ENCODE measurements at regions of chr12 and their contacts with region 1.

Region 1: DNA sequence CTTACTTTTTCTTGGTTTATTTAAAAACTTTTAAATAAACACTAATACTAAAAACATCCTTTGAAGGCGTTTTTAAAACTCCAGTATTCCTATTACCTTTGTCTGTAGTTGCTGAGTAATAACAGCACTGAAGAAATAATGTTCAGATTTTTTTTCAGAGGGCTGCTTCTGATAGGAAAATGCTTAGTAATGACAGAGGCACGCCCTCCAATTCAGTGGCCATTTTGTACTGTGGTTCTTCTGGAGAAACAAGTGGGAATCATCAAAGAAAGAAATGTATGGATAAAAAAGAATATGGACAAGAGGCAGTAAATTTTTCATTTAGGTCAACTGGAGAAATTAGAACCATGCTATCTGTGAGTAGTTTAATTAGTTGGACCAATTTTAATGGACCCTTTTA is 13.6 kb downstream of the VEZT start:
- DNase-seq: no peak
- ATAC-seq: no peak
- H3K4me3 ChIP-seq: no peak overlapping the region
- H3K4me3 Mint-ChIP-seq: no peak overlapping the region
- H3K27ac ChIP-seq: no peak overlapping the region
- H3K27ac Mint-ChIP-seq: no peak overlapping the region
- H3K4me1 ChIP-seq: no peaks in the 10 kb centered on the region
- H3K4me1 Mint-ChIP-seq: peaks cover 31 to 50% (median 39%) of the 10 kb centered on the region in 3 donors
- H3K27me3 ChIP-seq: no peaks in the 10 kb centered on the region
- H3K27me3 Mint-ChIP-seq: no peaks in the 10 kb centered on the region

Region 2: GRCh38 chr12:95054206-95054605 is 177.0 kb before region 1 on chr12:
- CTCF ChIA-PET with region 1: no interaction called
- POLR2A ChIA-PET with region 1: interaction called in 1 of 2 experiments, 11 read pairs
- DNase-seq: no peak
- ATAC-seq: no peak
- H3K4me3 ChIP-seq: no peak overlapping the region
- H3K4me3 Mint-ChIP-seq: no peak overlapping the region
- H3K27ac ChIP-seq: no peak overlapping the region
- H3K27ac Mint-ChIP-seq: no peak overlapping the region
- H3K4me1 ChIP-seq: no peaks in the 10 kb centered on the region
- H3K4me1 Mint-ChIP-seq: no peaks in the 10 kb centered on the region
- H3K27me3 ChIP-seq: no peaks in the 10 kb centered on the region
- H3K27me3 Mint-ChIP-seq: no peaks in the 10 kb centered on the region